ENCODE measurements at regions of chr5 and their contacts with region 1.

Region 1: DNA sequence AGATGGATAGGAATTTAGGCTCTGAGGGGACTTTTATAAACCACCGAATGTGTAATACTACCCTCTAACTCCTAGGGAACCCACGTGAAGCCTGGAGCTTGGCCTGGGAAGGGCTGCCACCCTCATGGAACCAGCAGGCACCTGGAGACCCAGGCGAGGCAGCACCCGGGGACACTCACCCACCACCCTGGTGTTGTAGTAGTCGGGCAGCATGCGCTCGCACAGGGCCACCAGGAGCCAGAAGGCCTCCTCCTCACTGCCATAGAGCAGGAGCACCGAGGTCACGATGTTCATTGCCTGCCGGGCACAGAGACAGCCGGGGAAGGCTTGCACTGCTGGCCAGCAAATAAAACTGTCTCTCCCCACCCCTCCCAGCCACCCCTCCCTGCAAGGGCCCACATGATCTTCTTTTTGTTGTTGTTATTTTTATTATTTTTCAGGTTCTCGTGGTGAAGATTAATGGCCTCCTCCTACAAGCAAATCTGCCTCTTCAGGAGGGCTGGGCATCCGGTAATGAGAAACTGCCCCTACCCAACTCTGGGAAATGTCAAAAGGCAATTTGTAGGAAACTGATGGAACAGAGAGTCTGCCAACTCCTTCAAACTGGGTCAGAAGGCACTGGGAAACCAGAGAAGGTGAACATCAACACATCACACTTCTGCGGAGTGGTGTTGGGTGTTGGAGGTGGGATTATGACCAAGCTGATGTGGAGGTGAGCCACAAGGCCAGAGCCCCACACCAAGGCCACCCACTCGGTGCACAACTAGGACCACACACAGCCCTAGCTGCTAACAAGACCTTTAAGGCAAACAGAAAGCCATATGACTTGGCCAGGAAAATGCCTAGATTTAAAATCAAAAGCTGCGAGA is 17.4 kb upstream of the MRNIP start:
- DNase-seq: no peak
- H3K4me3 ChIP-seq: no peak overlapping the region
- H3K27ac ChIP-seq: no peak overlapping the region
- H3K4me1 ChIP-seq: no peaks in the 10 kb centered on the region
- H3K27me3 ChIP-seq: no peaks in the 10 kb centered on the region
- CTCF ChIP-seq: no peak

Region 2: DNA sequence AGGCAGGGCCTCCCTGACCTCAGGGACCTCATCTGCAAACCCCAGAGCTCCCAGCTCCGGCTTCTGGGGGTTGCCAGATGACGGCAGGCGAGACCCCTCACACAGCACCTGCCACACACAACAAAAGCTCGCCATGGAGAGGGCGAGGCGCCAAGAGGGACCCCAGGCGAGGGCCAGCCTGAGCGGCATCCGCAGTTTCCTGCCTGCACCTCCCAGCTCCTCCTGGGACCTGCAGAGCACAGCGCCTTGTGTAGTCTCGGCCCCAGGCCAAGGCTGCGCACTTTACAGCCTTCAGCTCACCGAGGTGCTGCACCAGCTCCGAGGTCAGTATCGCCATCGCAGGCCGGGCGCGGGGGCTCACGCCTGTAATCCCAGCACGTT is 448.3 kb before region 1 on chr5:
- CTCF ChIA-PET with region 1: no interaction called
- POLR2A ChIA-PET with region 1: interaction called, 20 read pairs
- intact Hi-C with region 1: no loop called
- DNase-seq: peak in 1 of 2 experiments; percentile 26
- H3K4me3 ChIP-seq: no peak overlapping the region
- H3K27ac ChIP-seq: no peak overlapping the region
- H3K4me1 ChIP-seq: no peaks in the 10 kb centered on the region
- H3K27me3 ChIP-seq: peaks cover 93% of the 10 kb centered on the region
- CTCF ChIP-seq: no peak

Region 3: DNA sequence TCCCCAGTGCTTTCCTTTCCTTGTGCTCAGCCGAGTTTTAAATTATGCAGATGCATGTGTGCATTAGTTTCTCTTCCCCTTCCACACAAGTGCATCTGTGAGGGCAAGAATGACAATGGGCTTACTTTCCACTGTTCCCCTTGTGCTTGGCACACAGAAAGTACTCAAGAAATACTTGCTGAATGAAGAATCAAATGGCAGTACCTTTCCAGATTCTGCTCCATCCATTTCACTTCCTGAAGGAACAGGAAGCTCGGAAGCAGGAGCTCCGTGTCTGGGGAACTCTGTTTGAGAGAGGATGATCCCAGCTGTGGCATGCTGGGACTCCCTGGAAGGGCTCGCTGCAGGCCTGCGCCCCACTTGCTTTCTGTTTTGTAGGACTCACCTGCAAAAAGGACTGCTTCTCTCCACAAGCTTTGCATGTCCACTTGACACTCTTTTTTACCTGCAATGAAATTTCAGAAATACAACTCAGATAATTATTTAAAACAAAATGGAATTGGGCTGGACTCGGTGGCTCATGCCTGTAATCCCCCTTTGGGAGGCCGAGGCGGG is 22.9 kb before region 1 on chr5:
- CTCF ChIA-PET with region 1: no interaction called
- POLR2A ChIA-PET with region 1: no interaction called
- intact Hi-C with region 1: no loop called
- DNase-seq: no peak
- H3K4me3 ChIP-seq: no peak overlapping the region
- H3K27ac ChIP-seq: no peak overlapping the region
- H3K4me1 ChIP-seq: no peaks in the 10 kb centered on the region; the same call in 1 of the 2 replicates
- H3K27me3 ChIP-seq: no peaks in the 10 kb centered on the region
- CTCF ChIP-seq: no peak

Region 4: GRCh38 chr5:180117000-180117725 is 241.2 kb after region 1 on chr5:
- CTCF ChIA-PET with region 1: no interaction called
- POLR2A ChIA-PET with region 1: no interaction called
- intact Hi-C with region 1: no loop called
- DNase-seq: peak; percentile 40 to 76
- H3K4me3 ChIP-seq: no peak overlapping the region
- H3K27ac ChIP-seq: no peak overlapping the region
- H3K4me1 ChIP-seq: no peaks in the 10 kb centered on the region
- H3K27me3 ChIP-seq: no peaks in the 10 kb centered on the region
- CTCF ChIP-seq: peak; percentile 80